ENCODE measurements at regions of chr1 and their contacts with region 1.

Region 1: DNA sequence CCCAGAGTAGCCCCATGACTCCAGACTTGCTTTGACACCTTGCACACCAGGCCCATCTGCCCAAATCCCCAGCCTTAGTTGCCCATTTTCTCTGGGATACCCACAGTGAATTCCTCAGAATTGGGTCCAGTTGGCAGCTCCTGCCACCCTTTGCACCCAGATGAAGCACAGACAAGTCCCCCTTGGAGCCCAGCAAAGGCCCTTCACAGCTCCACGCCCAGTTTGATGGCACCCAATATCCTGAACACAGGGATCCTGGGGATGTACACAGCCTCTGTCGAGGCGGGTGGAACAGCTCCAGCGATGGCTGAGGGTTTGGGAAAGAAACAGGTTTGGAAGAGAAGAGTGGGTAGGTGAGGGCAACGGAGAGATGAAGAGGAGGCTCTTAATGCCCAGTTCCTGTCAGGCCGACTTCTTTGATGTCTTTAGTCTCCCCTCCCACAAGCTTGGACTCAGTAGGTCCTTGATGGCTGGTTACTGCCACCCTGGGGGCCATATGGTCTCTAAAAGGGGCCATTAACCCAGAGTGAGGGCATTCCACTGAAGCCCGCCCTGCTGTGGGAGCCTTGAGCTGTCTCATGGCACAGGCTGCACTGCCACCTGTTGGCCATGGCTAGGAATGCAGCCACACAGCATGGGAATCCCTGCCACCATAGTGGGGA is 21.7 kb downstream of the TMEM53 start:
- DNase-seq: peak; percentile 79
- ATAC-seq: peak; percentile 91
- H3K4me3 Mint-ChIP-seq: no peak overlapping the region
- H3K27ac Mint-ChIP-seq: no peak overlapping the region
- H3K4me1 Mint-ChIP-seq: no peaks in the 10 kb centered on the region
- H3K27me3 Mint-ChIP-seq: no peaks in the 10 kb centered on the region

Region 2: GRCh38 chr1:44377925-44378784 is 274.4 kb before region 1 on chr1:
- CTCF ChIA-PET with region 1: interaction called, 28 read pairs
- POLR2A ChIA-PET with region 1: no interaction called
- DNase-seq: peak; percentile 63
- ATAC-seq: no peak
- H3K4me3 Mint-ChIP-seq: no peak overlapping the region
- H3K27ac Mint-ChIP-seq: no peak overlapping the region
- H3K4me1 Mint-ChIP-seq: no peaks in the 10 kb centered on the region
- H3K27me3 Mint-ChIP-seq: peaks cover 2% of the 10 kb centered on the region

Region 3: DNA sequence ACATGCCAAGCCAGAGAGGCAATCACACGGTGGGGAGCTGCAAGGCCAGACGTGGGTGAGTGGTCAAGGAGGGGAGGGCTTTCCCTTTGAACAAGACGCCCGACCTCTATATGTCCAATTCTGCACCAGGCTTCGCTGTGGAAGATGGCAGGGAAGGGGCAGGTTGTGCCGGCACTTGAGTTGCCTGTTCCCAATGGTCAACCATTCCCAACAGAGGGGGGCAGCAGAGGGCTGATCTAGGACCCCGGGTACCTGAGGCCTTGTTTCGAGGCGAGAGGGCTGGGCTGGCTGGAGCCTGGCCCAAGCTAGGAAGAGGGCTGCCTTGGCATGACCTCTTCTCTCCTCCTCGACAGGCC is 43.2 kb before region 1 on chr1:
- CTCF ChIA-PET with region 1: interaction called, 19 read pairs
- POLR2A ChIA-PET with region 1: no interaction called
- DNase-seq: peak; percentile 28
- ATAC-seq: no peak
- H3K4me3 Mint-ChIP-seq: no peak overlapping the region
- H3K27ac Mint-ChIP-seq: no peak overlapping the region
- H3K4me1 Mint-ChIP-seq: no peaks in the 10 kb centered on the region
- H3K27me3 Mint-ChIP-seq: peaks cover 2% of the 10 kb centered on the region

Region 4: DNA sequence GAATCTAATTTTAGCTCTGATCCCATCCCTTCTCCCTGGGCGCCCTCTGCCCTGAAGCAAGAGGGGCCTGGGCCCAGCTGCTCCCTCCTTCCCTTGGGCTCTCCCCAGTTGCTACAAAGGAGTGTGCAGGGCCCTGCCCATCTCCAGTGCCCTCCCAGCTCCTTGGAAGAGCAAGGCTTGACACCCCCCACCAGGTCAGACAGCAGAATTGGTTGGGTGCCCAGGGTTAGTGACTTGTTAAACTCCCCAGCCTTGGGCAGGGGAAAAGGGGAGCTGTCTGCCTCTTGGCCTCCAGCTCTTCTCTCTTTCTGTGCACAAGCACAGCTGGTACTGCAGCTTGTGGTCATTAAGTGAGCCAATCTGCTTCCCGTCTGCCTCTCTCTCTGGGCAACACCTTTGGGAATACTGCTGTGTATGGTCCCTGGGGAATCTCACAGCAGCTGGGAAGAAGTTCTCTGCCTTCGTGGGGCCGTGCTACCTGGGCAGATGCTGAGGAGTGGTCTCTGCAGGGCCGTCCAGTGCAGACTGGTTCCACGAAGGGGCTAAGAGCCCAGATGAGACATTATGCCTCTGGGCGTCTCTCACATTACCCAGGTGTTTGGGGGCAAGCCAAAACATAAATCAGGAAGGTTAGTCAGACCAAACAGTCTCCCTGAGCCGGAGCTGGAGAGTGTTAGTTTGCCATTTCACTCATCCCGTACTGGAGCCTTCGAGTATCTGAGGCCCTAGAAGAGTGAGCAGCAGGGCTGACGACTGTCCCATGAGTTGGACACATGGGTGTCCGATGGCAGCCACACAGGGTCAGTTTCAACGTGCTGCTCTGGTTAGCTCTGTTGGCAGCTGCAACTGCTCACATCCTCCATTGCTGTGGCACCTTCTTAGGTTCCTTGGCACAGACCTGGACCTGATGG is 15.6 kb before region 1 on chr1:
- CTCF ChIA-PET with region 1: interaction called, 59 read pairs
- POLR2A ChIA-PET with region 1: interaction called, 17 read pairs
- DNase-seq: no peak
- ATAC-seq: no peak
- H3K4me3 Mint-ChIP-seq: no peak overlapping the region
- H3K27ac Mint-ChIP-seq: no peak overlapping the region
- H3K4me1 Mint-ChIP-seq: peaks cover 17% of the 10 kb centered on the region
- H3K27me3 Mint-ChIP-seq: no peaks in the 10 kb centered on the region

Region 5: GRCh38 chr1:44684525-44684924 is 31.9 kb after region 1 on chr1:
- CTCF ChIA-PET with region 1: interaction called, 24 read pairs
- POLR2A ChIA-PET with region 1: no interaction called
- DNase-seq: no peak
- ATAC-seq: peak; percentile 39
- H3K4me3 Mint-ChIP-seq: no peak overlapping the region
- H3K27ac Mint-ChIP-seq: no peak overlapping the region
- H3K4me1 Mint-ChIP-seq: peaks cover 8% of the 10 kb centered on the region
- H3K27me3 Mint-ChIP-seq: peaks cover 2% of the 10 kb centered on the region

Measured in activated CD8-positive, alpha-beta T cell treated with anti-CD3 and anti-CD28 coated beads, Interleukin-2, amount 10 ng/mL, durations not matched to agents 7 days and 5 days (primary cell).